Caco-2 (cell line): ENCODE measurements at regions of chr16 and their contacts with region 1.

Region 1: DNA sequence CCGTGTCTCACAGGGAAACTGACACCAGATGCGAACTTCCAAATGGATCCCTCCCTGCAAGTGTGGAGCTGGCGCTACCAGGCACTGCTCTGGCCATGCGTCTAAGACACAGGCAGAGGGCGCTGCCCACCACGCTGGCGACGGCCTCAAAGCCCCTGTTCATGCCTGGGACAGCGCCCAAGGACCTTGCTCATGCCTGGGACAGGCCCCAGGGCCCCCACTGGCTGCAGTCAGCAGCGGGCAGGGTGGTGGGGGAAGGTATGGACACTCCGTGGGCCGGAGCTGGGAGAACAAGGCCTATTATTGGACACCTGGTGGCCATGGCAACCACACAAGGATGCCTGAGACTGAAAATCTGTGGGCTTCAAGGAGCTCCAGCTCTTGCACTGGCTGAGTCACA is 8.8 kb downstream of the ZG16B start:
- DNase-seq: peak; percentile 73 to 74
- H3K4me3 ChIP-seq: no peak overlapping the region
- H3K4me3 Mint-ChIP-seq: no peak overlapping the region
- H3K27ac Mint-ChIP-seq: peak overlapping the region; percentile 63
- H3K4me1 ChIP-seq: peaks cover 20% of the 10 kb centered on the region
- H3K4me1 Mint-ChIP-seq: peaks cover 25% of the 10 kb centered on the region
- H3K27me3 ChIP-seq: no peaks in the 10 kb centered on the region
- H3K27me3 Mint-ChIP-seq: no peaks in the 10 kb centered on the region
- CTCF ChIP-seq: peak; percentile 65 to 70

Region 2: GRCh38 chr16:2799866-2800239 is 39.1 kb before region 1 on chr16:
- CTCF ChIA-PET with region 1: interaction called, 3 read pairs
- POLR2A ChIA-PET with region 1: no interaction called
- intact Hi-C with region 1: loop called (anchors 5 kb)
- DNase-seq: peak; percentile 78 to 91
- H3K4me3 ChIP-seq: no peak overlapping the region
- H3K4me3 Mint-ChIP-seq: no peak overlapping the region
- H3K27ac Mint-ChIP-seq: peak overlapping the region; percentile 71
- H3K4me1 ChIP-seq: peaks cover 35% of the 10 kb centered on the region
- H3K4me1 Mint-ChIP-seq: peaks cover 24% of the 10 kb centered on the region
- H3K27me3 ChIP-seq: no peaks in the 10 kb centered on the region
- H3K27me3 Mint-ChIP-seq: no peaks in the 10 kb centered on the region
- CTCF ChIP-seq: no peak

Region 3: DNA sequence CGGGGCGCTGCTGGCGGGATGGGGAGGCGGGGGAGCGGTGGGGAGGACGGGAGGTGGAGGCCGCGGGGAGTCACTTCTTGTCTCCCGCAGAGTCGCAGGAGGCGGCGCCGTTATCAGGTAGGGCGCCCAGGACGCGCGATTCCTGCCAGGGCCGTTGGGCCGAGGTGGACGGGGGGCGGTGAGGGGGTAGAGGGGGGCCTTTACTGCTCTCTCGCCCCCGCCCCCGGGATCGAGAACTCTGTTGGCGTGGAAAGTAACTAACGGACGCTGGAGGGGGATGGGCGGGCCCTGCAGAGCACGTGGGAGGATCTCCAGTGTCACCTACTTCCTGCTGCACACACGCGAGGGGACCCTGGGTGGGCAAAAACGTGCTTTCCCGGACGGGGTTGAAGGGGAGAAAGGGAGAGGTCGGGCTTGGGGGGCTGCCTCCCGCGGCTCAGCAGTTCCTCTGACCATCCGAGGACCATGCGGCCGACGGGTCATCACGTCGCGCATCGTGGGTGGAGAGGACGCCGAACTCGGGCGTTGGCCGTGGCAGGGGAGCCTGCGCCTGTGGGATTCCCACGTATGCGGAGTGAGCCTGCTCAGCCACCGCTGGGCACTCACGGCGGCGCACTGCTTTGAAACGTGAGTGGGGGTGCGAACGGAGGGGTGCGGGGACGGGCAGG is 21.5 kb before region 1 on chr16:
- CTCF ChIA-PET with region 1: no interaction called
- POLR2A ChIA-PET with region 1: no interaction called
- intact Hi-C with region 1: no loop called
- DNase-seq: no peak
- H3K4me3 ChIP-seq: no peak overlapping the region
- H3K4me3 Mint-ChIP-seq: no peak overlapping the region
- H3K27ac Mint-ChIP-seq: no peak overlapping the region
- H3K4me1 ChIP-seq: peaks cover 10% of the 10 kb centered on the region
- H3K4me1 Mint-ChIP-seq: no peaks in the 10 kb centered on the region
- H3K27me3 ChIP-seq: no peaks in the 10 kb centered on the region
- H3K27me3 Mint-ChIP-seq: no peaks in the 10 kb centered on the region
- CTCF ChIP-seq: no peak

Region 4: DNA sequence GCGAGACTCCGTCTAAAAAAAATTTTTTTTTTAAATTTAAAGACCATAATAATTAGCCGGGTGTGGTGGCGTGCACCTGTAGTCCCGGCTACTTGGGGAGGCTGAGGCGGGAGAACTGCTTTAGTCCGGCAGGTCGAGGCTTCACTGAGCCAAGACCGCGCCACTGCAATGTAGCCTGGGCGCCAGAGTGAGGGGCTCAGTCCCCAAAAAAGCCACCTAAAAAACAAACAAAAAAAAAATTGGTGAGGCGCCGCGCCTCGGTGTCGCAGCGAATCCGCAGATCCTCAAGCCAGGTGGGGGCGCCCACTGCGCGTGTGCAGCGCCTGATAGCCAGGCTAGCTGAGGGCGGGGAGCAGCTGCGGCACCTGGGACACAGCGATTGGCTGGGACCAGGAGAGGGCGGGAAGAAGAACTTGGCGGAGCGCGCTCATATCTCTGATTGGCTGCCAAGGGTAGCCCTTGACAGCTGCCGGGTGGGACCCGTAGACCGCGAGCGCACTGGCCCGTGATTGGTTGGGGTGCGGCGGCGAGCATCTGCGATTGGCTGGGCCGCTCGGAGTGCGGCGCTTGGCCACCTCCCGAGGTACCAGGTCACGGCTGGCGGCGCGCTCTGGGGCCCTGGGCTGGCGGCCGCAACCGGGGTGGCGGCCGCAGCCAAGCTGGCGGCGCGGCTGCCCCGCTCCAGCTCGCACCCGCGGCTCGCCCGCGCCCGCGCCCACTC is 164.8 kb after region 1 on chr16:
- CTCF ChIA-PET with region 1: interaction called, 15 read pairs
- POLR2A ChIA-PET with region 1: no interaction called
- intact Hi-C with region 1: no loop called
- DNase-seq: peak; percentile 98 to 99
- H3K4me3 ChIP-seq: peak overlapping the region; percentile 52
- H3K4me3 Mint-ChIP-seq: peak overlapping the region; percentile 89
- H3K27ac Mint-ChIP-seq: no peak overlapping the region
- H3K4me1 ChIP-seq: peaks cover 35% of the 10 kb centered on the region
- H3K4me1 Mint-ChIP-seq: peaks cover 18% of the 10 kb centered on the region
- H3K27me3 ChIP-seq: no peaks in the 10 kb centered on the region
- H3K27me3 Mint-ChIP-seq: no peaks in the 10 kb centered on the region
- CTCF ChIP-seq: peak; percentile 42 to 80